Caco-2 (cell line): ENCODE measurements at regions of chr9 and their contacts with region 1.

Region 1: GRCh38 chr9:90331826-90332575 is 310.6 kb downstream of the DIRAS2 start:
- DNase-seq: no peak
- H3K4me3 ChIP-seq: no peak overlapping the region
- H3K4me3 Mint-ChIP-seq: peak overlapping the region; percentile 34
- H3K27ac Mint-ChIP-seq: peak overlapping the region; percentile 66
- H3K4me1 ChIP-seq: peaks cover 35% of the 10 kb centered on the region
- H3K4me1 Mint-ChIP-seq: peaks cover 11% of the 10 kb centered on the region
- H3K27me3 ChIP-seq: no peaks in the 10 kb centered on the region
- H3K27me3 Mint-ChIP-seq: no peaks in the 10 kb centered on the region
- CTCF ChIP-seq: no peak

Region 2: GRCh38 chr9:90349907-90350306 is 17.9 kb after region 1 on chr9:
- CTCF ChIA-PET with region 1: no interaction called
- POLR2A ChIA-PET with region 1: no interaction called
- intact Hi-C with region 1: no loop called
- DNase-seq: no peak
- H3K4me3 ChIP-seq: no peak overlapping the region
- H3K4me3 Mint-ChIP-seq: no peak overlapping the region
- H3K27ac Mint-ChIP-seq: no peak overlapping the region
- H3K4me1 ChIP-seq: no peaks in the 10 kb centered on the region
- H3K4me1 Mint-ChIP-seq: no peaks in the 10 kb centered on the region
- H3K27me3 ChIP-seq: no peaks in the 10 kb centered on the region
- H3K27me3 Mint-ChIP-seq: no peaks in the 10 kb centered on the region
- CTCF ChIP-seq: no peak

Region 3: DNA sequence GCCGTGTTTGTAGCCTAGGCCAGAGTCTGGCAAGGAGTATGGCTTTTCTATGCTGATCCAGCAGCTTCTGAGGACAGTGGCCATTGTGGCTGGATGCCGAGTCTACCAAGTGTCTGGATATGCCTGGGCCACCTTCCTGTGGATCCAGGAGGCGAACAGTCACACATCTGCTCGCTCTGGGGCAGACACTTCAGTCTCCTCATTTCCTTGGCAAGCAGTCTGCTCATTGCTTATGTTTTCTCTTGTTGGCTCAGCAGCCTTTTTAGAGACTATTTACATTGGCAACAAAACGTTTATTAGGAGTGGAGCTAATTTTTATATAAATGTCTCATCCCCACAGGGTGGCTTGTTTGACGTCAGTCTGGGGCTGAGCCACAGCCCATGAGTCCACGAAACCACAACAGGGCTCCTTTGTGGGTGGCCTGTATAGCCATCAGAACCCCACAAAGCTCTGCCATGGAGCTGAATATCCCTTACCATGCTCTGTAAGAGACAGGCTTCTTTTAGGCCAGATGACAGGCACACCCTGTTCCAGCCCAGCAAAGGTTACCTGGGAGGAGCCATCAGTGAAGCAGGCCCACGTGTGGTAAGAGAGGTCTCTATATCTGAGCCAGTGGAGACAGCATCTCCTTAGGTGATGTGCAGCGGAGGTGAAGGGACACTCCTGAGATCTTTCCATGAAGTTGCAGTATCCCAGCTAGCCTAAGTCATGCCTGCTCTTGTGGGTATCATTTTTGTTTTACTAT is 88.9 kb after region 1 on chr9:
- CTCF ChIA-PET with region 1: no interaction called
- POLR2A ChIA-PET with region 1: interaction called, 5 read pairs
- intact Hi-C with region 1: loop called (anchors 5 kb)
- DNase-seq: no peak
- H3K4me3 ChIP-seq: no peak overlapping the region
- H3K4me3 Mint-ChIP-seq: no peak overlapping the region
- H3K27ac Mint-ChIP-seq: no peak overlapping the region
- H3K4me1 ChIP-seq: peaks cover 14% of the 10 kb centered on the region; the same call in 1 of the 2 replicates
- H3K4me1 Mint-ChIP-seq: peaks cover 22% of the 10 kb centered on the region
- H3K27me3 ChIP-seq: no peaks in the 10 kb centered on the region
- H3K27me3 Mint-ChIP-seq: no peaks in the 10 kb centered on the region
- CTCF ChIP-seq: no peak